Prostate gland (tissue), 2 donors: ENCODE measurements at regions of chr12 and their contacts with region 1.

Region 1: GRCh38 chr12:29519585-29520182 is 22.2 kb upstream of the OVCH1 start:
- DNase-seq: peak; percentile 16
- H3K4me3 ChIP-seq: no peak overlapping the region
- H3K27ac ChIP-seq: no peak overlapping the region
- H3K4me1 ChIP-seq: no peaks in the 10 kb centered on the region
- H3K27me3 ChIP-seq: no peaks in the 10 kb centered on the region
- CTCF ChIP-seq: peak; percentile 25 to 75 (median 66)
- POLR2A ChIP-seq: no peak

Region 2: DNA sequence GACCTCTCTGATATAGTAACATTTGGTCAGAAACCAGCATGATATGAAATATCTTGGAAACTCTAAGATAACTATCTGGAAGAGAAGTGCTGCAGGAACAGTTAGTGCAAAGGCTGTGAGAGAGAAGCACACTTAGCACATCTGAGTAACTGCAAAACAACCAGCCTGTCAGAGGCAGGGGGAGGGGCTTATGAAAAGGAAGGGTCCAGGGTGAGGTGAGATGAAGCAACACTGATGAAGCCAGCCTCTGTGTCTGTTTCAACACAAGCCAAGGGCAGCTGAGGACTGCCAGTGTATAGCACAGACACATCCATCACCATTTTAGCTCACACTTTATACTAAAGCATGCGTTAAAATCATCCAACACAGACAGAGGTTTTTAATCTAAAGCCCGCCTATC is 15.3 kb after region 1 on chr12:
- intact Hi-C with region 1: no loop called
- DNase-seq: no peak
- H3K4me3 ChIP-seq: no peak overlapping the region
- H3K27ac ChIP-seq: no peak overlapping the region
- H3K4me1 ChIP-seq: no peaks in the 10 kb centered on the region
- H3K27me3 ChIP-seq: no peaks in the 10 kb centered on the region
- CTCF ChIP-seq: no peak
- POLR2A ChIP-seq: no peak

Region 3: GRCh38 chr12:30286345-30286926 is 766.8 kb after region 1 on chr12:
- intact Hi-C with region 1: loop called (anchors 10 kb)
- DNase-seq: no peak
- H3K4me3 ChIP-seq: no peak overlapping the region
- H3K27ac ChIP-seq: no peak overlapping the region
- H3K4me1 ChIP-seq: no peaks in the 10 kb centered on the region
- H3K27me3 ChIP-seq: no peaks in the 10 kb centered on the region
- CTCF ChIP-seq: peak in 3 of 4 experiments; percentile 28 to 49 (median 42)
- POLR2A ChIP-seq: no peak

Region 4: DNA sequence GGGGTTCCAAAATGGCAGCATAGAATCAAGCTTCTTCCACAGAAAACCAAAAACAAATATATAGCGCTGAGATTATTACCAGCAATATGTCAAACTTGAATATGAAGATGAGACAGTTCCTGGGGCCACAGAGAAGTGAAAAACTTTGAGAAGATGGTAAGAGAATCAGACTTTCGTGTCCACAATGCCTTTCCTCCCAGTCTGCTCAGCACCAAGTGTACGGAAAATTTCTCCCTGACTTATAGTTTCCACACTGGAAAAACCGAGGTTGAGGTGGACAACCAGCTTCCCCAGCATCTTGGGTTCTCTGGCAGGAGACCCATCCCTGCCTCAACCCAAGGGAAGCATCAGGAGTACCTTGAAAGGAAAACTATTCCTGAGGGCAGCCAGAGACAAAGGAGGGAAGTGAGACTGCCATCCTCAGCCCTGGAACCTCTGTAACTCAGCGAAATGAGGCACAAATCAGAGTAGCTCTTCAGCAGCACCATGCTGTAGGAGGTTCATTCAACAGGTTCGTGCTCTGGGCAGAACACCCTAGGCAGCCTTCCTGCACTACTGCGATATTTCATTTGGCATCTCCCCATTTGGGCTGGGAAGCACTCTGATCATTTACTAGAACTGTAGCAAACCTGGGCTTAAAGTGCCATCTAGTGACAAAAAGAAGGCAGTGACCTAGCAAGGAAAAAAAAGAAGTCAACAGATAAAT is 1287.5 kb after region 1 on chr12:
- intact Hi-C with region 1: loop called (anchors 10 kb)
- DNase-seq: peak; percentile 45
- H3K4me3 ChIP-seq: no peak overlapping the region
- H3K27ac ChIP-seq: no peak overlapping the region
- H3K4me1 ChIP-seq: no peaks in the 10 kb centered on the region
- H3K27me3 ChIP-seq: no peaks in the 10 kb centered on the region
- CTCF ChIP-seq: peak in 3 of 4 experiments; percentile 57 to 81 (median 78)
- POLR2A ChIP-seq: no peak